Lower leg skin (tissue), 4 donors: ENCODE measurements at regions of chr12 and their contacts with region 1.

Region 1: GRCh38 chr12:39886091-39886490 is 219.8 kb downstream of the SLC2A13 start:
- DNase-seq: no peak
- H3K4me3 ChIP-seq: no peak overlapping the region
- CTCF ChIP-seq: no peak
- POLR2A ChIP-seq: no peak

Region 2: DNA sequence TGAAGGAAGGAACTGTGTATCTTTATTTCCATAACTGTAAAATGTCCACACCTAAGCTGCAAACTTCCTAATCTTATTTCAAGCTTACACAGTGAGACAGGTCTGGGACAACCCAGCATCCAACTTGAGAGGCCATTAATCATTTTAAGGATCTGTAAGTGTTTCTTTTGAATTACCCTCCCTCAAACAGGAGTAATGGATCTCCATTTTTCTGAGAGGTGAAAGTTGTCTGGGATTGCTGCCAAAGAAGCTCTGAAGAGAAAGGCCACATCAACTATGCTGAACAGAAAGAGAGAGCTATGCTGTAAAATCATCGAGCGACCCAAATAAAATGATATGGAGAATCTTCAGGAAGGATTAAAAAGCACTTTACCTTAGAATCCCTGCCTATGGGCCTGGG is 849.0 kb before region 1 on chr12:
- intact Hi-C with region 1: no loop called
- DNase-seq: no peak
- H3K4me3 ChIP-seq: no peak overlapping the region
- CTCF ChIP-seq: no peak
- POLR2A ChIP-seq: no peak

Region 3: DNA sequence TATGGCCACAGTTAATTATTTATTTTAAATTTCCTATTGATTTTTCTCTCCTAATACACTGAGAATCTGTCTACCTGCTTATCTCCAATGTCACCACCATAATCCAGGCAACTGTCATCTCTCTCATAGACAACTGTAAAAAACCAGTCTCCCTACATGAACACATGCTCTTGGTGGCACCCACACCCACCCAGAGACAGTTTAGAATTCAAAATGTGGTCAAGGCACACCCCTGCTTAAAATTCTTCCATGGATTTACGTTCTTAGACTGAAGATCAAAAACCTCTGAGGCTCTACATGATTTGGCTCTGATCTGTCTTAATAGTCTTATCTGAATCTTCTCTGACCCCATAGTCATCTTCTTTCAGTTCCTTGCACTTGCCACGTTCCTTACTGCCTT is 25.4 kb before region 1 on chr12:
- intact Hi-C with region 1: loop called (anchors 2 kb)
- DNase-seq: no peak
- H3K4me3 ChIP-seq: no peak overlapping the region
- CTCF ChIP-seq: no peak
- POLR2A ChIP-seq: no peak

Region 4: GRCh38 chr12:40281791-40282364 is 395.8 kb after region 1 on chr12:
- intact Hi-C with region 1: no loop called
- DNase-seq: no peak
- H3K4me3 ChIP-seq: no peak overlapping the region
- CTCF ChIP-seq: no peak
- POLR2A ChIP-seq: no peak